IMR-90 (cell line): ENCODE measurements at regions of chr12 and their contacts with region 1.

Region 1: GRCh38 chr12:109888179-109889020 is 8.1 kb upstream of the GLTP start:
- DNase-seq: peak; percentile 97
- ATAC-seq: peak; percentile 95
- H3K4me3 ChIP-seq: no peak overlapping the region
- H3K27ac ChIP-seq: peak overlapping the region; percentile 77
- H3K4me1 ChIP-seq: 0 out of 2 replicates have a peak, but pooled peaks cover 6% of the 10 kb centered on the region
- H3K27me3 ChIP-seq: no peaks in the 10 kb centered on the region; the same call in 1 of the 2 replicates
- CTCF ChIP-seq: no peak
- POLR2A ChIP-seq: no peak; the same call in 1 of the 2 replicates
- RAD21 ChIP-seq: no peak; the same call in 1 of the 2 replicates

Region 2: DNA sequence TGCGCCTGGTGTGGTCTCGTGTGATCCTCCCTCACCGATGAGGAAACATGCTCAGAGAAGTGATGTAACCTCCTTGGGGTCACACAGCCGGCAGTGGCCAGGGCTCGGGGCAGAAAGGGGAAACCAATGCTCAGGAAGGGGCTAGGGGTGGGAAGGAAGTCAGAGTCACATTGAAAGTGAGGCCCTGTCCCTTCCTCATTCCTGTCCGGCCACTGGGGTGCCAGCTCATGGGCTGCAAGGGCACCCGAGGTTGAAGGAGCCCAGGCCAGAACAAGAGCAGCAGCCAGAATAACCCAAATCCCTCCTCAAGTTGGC is 60.2 kb before region 1 on chr12:
- CTCF ChIA-PET with region 1: no interaction called
- POLR2A ChIA-PET with region 1: interaction called, 16 read pairs
- dilution Hi-C with region 1: no loop called
- in situ Hi-C with region 1: no loop called
- intact Hi-C with region 1: no loop called
- DNase-seq: no peak
- ATAC-seq: 0 out of 2 replicates have a peak, but pooled peaks have one; percentile 18
- H3K4me3 ChIP-seq: no peak overlapping the region
- H3K27ac ChIP-seq: no peak overlapping the region
- H3K4me1 ChIP-seq: peaks cover 2% of the 10 kb centered on the region; the same call in 1 of the 2 replicates
- H3K27me3 ChIP-seq: no peaks in the 10 kb centered on the region
- CTCF ChIP-seq: no peak
- POLR2A ChIP-seq: no peak
- RAD21 ChIP-seq: no peak

Region 3: DNA sequence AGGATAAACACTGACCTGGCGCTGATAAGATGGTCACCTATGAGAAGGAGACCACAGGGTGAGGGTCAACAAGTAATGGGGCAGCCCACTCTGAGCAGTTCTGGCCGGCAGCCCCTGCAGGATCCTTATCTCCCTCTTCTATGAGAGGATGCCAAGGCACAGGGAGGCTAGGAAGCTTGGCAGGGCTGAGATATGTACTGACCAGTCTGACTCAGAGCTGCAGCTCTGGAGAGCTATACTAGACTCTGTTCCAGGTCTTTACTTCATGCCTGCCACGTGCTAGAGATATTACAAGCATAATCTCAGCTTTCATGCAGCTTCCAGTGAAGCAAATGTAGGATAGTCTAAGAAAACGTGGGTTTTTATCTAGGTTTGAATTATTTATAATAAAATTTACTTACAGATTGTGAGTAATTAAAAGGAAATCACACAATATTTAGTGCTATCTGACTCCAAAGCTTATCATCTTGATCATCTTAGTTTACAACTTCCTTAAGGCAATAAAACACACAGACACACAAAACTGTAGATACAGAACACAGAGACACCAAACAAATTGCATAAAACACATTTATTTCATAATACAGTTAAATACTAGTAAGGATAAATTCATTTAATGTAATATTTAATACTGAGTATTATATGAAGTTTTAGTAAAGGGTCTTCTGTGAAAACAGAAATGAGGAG is 75.5 kb after region 1 on chr12:
- CTCF ChIA-PET with region 1: no interaction called
- POLR2A ChIA-PET with region 1: interaction called, 16 read pairs
- dilution Hi-C with region 1: no loop called
- in situ Hi-C with region 1: no loop called
- intact Hi-C with region 1: no loop called
- DNase-seq: peak; percentile 73
- ATAC-seq: peak; percentile 86
- H3K4me3 ChIP-seq: no peak overlapping the region
- H3K27ac ChIP-seq: no peak overlapping the region
- H3K4me1 ChIP-seq: 0 out of 2 replicates have a peak, but pooled peaks cover 1% of the 10 kb centered on the region
- H3K27me3 ChIP-seq: no peaks in the 10 kb centered on the region
- CTCF ChIP-seq: no peak
- POLR2A ChIP-seq: no peak
- RAD21 ChIP-seq: no peak